G401 (cell line): ENCODE measurements at regions of chr17 and their contacts with region 1.

Region 1: GRCh38 chr17:73349138-73349537 is 37.3 kb upstream of the CDC42EP4 start:
- DNase-seq: no peak

Region 2: GRCh38 chr17:73249700-73250099 is 99.4 kb before region 1 on chr17:
- in situ Hi-C with region 1: loop called (anchors 5 kb)
- DNase-seq: no peak

Region 3: DNA sequence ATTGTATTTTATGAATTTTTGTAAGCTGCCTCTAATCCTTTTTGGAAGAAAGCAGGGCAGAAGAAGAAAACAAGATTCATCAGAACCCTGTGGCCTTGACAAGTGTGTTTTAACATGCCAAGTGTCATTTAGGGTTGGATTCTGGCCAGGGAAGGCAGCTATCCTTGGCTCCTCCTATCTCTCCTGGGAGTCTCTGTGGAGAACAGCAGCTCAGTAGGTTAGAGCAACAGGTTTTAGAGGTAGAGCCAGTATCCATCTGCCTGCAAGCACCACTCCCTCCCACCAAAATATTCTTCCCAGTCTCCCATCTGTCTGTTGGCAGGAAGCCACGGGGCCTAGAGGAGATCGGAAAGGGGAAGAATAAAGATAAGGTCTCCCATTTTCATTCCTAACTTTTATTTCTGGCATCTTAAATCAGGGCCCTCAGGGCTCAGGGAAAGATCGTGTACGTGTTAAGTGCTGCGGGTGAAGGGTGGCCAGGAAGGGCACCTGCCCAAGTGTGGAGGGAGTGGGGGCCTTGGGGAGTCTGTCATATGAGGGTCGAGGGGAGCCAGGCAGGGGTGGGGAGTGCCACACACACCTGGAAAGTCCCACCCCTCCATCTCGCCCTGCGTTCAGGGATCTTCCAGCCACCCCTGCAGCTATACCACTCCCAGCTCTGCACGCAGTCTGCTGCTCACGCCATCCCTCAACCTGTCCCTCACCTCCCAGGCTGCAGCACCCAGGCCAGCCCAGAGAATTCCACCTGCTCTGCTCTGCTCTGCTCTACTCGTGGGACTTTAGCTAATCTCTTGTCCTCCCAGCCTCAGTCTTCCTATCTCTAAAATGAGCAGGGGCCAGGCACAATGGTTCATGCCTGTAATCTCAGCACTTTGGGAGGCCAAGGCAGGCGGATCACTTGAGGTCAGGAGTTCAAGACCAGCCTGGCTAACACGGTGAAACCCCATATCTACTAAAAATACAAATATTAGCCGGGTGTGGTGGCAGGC is 70.4 kb before region 1 on chr17:
- in situ Hi-C with region 1: no loop called
- DNase-seq: peak; percentile 96